Naive thymus-derived CD4-positive, alpha-beta T cell (primary cell): ENCODE measurements at regions of chr15 and their contacts with region 1.

Region 1: GRCh38 chr15:68277603-68278344 is at the start of gene FEM1B:
- DNase-seq: peak; percentile 82 to 92 (median 88)
- ATAC-seq: peak; percentile 89
- H3K4me3 ChIP-seq: peak within 1 kb of the TSS; percentile 92
- H3K4me3 Mint-ChIP-seq: peak within 1 kb of the TSS; percentile 86 to 100 (median 96)
- H3K27ac ChIP-seq: peak within 1 kb of the TSS; percentile 90
- H3K27ac Mint-ChIP-seq: peak within 1 kb of the TSS; percentile 89 to 99 (median 98)
- H3K4me1 ChIP-seq: peaks cover 33 to 38% of the 10 kb centered on the region in 2 donors
- H3K4me1 Mint-ChIP-seq: peaks cover 40 to 63% (median 56%) of the 10 kb centered on the region in 7 donors
- H3K27me3 ChIP-seq: no peaks in the 10 kb centered on the region
- H3K27me3 Mint-ChIP-seq: no peaks in the 10 kb centered on the region
- total RNA-seq, gene FEM1B: 56.5 to 73.2 (median 62.0) TPM

Region 2: DNA sequence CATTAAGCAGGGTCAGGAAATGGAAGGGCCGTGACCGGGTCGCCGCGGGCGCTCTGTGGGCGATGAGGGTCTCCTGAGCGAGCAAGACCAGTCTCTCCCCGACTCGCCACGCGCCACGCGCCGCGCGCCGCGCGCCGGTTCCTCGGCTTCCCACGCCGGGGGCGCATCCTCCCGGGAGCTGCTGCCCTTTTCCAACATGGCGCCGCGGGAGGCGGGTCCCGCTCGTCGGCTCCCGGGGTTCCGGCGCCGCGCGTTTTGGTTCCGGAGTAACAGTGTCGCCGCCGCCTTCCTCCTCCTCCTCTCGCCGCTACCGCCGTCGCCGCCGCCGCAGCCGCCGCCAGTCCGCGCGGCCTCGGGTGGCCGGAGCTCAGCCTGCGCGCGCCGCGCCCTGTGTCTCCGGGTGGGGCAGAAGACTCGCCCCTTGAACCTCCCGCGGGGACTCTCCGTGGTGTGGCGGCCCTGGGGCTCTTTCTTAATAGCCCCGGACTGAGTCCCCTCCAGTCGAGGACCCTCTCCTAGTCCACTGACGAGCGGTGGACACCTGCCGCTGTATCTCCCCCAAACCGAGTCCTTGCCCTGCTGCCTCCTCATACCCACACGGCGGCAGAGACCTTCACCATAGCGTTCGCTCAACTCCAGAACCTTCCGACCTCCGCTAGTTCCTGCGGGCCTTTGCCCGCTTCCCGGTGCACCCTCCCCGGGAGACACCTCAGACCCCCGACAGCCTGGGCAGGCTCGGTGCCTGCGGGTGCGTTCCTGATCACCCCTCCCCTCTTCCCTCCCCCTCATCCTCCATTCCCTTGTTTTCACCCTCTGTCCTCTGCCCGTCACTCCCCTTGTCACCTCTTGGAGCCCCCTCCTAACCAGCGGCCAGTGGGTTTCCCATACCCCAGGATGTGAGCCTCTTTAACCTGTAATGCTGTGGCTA is 735.1 kb before region 1 on chr15 and contains the start of gene MAP2K5:
- CTCF ChIA-PET with region 1: no interaction called
- POLR2A ChIA-PET with region 1: interaction called, 7 read pairs
- intact Hi-C with region 1: loop called (anchors 1 to 5 kb)
- DNase-seq: peak; percentile 75 to 87 (median 78)
- ATAC-seq: peak; percentile 89
- H3K4me3 ChIP-seq: peak within 1 kb of the TSS; percentile 90
- H3K4me3 Mint-ChIP-seq: peak within 1 kb of the TSS; percentile 92 to 98 (median 98)
- H3K27ac ChIP-seq: peak within 1 kb of the TSS; percentile 78
- H3K27ac Mint-ChIP-seq: peak within 1 kb of the TSS; percentile 97 to 100 (median 99)
- H3K4me1 ChIP-seq: peaks cover 7 to 22% of the 10 kb centered on the region in 2 donors
- H3K4me1 Mint-ChIP-seq: peaks cover 20 to 68% (median 56%) of the 10 kb centered on the region in 7 donors
- H3K27me3 ChIP-seq: no peaks in the 10 kb centered on the region
- H3K27me3 Mint-ChIP-seq: no peaks in the 10 kb centered on the region
- total RNA-seq, gene MAP2K5: 23.4 to 43.4 (median 35.7) TPM

Region 3: GRCh38 chr15:68149059-68149458 is 128.7 kb before region 1 on chr15:
- CTCF ChIA-PET with region 1: no interaction called
- POLR2A ChIA-PET with region 1: no interaction called
- intact Hi-C with region 1: no loop called
- DNase-seq: no peak
- ATAC-seq: no peak
- H3K4me3 ChIP-seq: no peak overlapping the region
- H3K4me3 Mint-ChIP-seq: no peak overlapping the region
- H3K27ac ChIP-seq: no peak overlapping the region
- H3K27ac Mint-ChIP-seq: peak overlapping the region in 6 of 9 donors; percentile 1 to 77 (median 44)
- H3K4me1 ChIP-seq: no peaks in the 10 kb centered on the region
- H3K4me1 Mint-ChIP-seq: peaks cover 4 to 28% (median 24%) of the 10 kb centered on the region in 7 donors
- H3K27me3 ChIP-seq: no peaks in the 10 kb centered on the region
- H3K27me3 Mint-ChIP-seq: no peaks in the 10 kb centered on the region

Region 4: GRCh38 chr15:68229386-68230156 is 48.2 kb before region 1 on chr15 and contains the start of gene CLN6:
- CTCF ChIA-PET with region 1: no interaction called
- POLR2A ChIA-PET with region 1: interaction called, 16 read pairs
- intact Hi-C with region 1: loop called (anchors 1 kb)
- DNase-seq: peak; percentile 68 to 88 (median 81)
- ATAC-seq: peak; percentile 94
- H3K4me3 ChIP-seq: peak within 1 kb of the TSS; percentile 93
- H3K4me3 Mint-ChIP-seq: peak within 1 kb of the TSS; percentile 86 to 98 (median 92)
- H3K27ac ChIP-seq: peak within 1 kb of the TSS; percentile 79
- H3K27ac Mint-ChIP-seq: peak within 1 kb of the TSS; percentile 69 to 97 (median 88)
- H3K4me1 ChIP-seq: peaks cover 0 to 17% of the 10 kb centered on the region in 2 donors
- H3K4me1 Mint-ChIP-seq: peaks cover 30 to 44% (median 38%) of the 10 kb centered on the region in 7 donors
- H3K27me3 ChIP-seq: no peaks in the 10 kb centered on the region
- H3K27me3 Mint-ChIP-seq: peaks cover 0 to 3% (median 0%) of the 10 kb centered on the region in 5 donors
- total RNA-seq, gene CLN6: 15.0 to 66.6 (median 19.0) TPM

Region 5: DNA sequence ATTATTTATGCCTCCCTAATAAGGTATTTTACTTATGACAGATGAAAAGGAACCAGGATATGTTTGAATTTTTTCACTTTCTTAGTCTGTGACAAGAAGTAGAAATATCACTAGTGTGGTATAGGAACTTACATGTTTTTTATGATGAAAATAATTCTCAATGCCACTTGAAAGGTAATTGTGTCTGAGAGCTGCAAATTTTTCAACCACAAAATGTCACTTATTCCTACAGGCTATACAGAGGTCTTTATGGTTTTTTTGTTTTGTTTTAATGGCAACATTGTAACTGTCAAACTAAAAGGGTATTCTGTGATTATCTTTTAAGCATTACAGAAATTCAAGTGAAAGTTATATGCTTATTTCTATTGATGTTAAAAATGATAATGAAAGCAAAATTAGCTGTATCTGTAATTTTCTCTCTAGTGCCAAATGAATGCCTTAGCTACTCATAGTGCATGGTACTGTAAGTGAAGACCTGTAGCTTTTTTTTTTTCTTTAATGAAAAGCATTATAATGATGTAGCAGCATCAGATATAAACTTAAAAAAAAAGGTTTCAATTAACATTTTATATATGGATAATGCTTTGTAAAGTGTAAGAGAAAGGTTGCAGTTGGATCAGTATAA is 14.5 kb after region 1 on chr15:
- CTCF ChIA-PET with region 1: interaction called, 3 read pairs
- POLR2A ChIA-PET with region 1: interaction called, 31 read pairs
- intact Hi-C with region 1: no loop called
- DNase-seq: no peak
- ATAC-seq: peak; percentile 53
- H3K4me3 ChIP-seq: no peak overlapping the region
- H3K4me3 Mint-ChIP-seq: no peak overlapping the region
- H3K27ac ChIP-seq: no peak overlapping the region
- H3K27ac Mint-ChIP-seq: peak overlapping the region in 3 of 9 donors; percentile 25 to 56 (median 42)
- H3K4me1 ChIP-seq: peaks cover 10% of the 10 kb centered on the region in 2 donors
- H3K4me1 Mint-ChIP-seq: peaks cover 28 to 79% (median 49%) of the 10 kb centered on the region in 7 donors
- H3K27me3 ChIP-seq: no peaks in the 10 kb centered on the region
- H3K27me3 Mint-ChIP-seq: no peaks in the 10 kb centered on the region

Region 6: GRCh38 chr15:68304589-68305337 is 27.0 kb after region 1 on chr15:
- CTCF ChIA-PET with region 1: interaction called, 4 read pairs
- POLR2A ChIA-PET with region 1: interaction called, 10 read pairs
- intact Hi-C with region 1: loop called (anchors 1 kb)
- DNase-seq: no peak
- ATAC-seq: no peak
- H3K4me3 ChIP-seq: no peak overlapping the region
- H3K4me3 Mint-ChIP-seq: no peak overlapping the region
- H3K27ac ChIP-seq: no peak overlapping the region
- H3K27ac Mint-ChIP-seq: peak overlapping the region in 4 of 9 donors; percentile 23 to 72 (median 56)
- H3K4me1 ChIP-seq: peaks cover 5 to 15% of the 10 kb centered on the region in 2 donors
- H3K4me1 Mint-ChIP-seq: peaks cover 11 to 30% (median 27%) of the 10 kb centered on the region in 7 donors
- H3K27me3 ChIP-seq: no peaks in the 10 kb centered on the region
- H3K27me3 Mint-ChIP-seq: peaks cover 0 to 7% (median 0%) of the 10 kb centered on the region in 5 donors

Region 7: GRCh38 chr15:69413822-69414700 is 1136.3 kb after region 1 on chr15 and contains the start of gene KIF23:
- CTCF ChIA-PET with region 1: no interaction called
- POLR2A ChIA-PET with region 1: no interaction called
- intact Hi-C with region 1: loop called (anchors 10 kb)
- DNase-seq: peak; percentile 84 to 93 (median 90)
- ATAC-seq: peak; percentile 98
- H3K4me3 ChIP-seq: peak within 1 kb of the TSS; percentile 66
- H3K4me3 Mint-ChIP-seq: peak within 1 kb of the TSS; percentile 81 to 88 (median 86)
- H3K27ac ChIP-seq: no peak within 1 kb of the TSS
- H3K27ac Mint-ChIP-seq: peak within 1 kb of the TSS in 7 of 9 donors; percentile 34 to 86 (median 78)
- H3K4me1 ChIP-seq: peaks cover 0 to 4% of the 10 kb centered on the region in 2 donors
- H3K4me1 Mint-ChIP-seq: peaks cover 0 to 36% (median 7%) of the 10 kb centered on the region in 7 donors
- H3K27me3 ChIP-seq: peaks cover 0 to 9% of the 10 kb centered on the region in 2 donors
- H3K27me3 Mint-ChIP-seq: peaks cover 8 to 22% (median 10%) of the 10 kb centered on the region in 5 donors
- total RNA-seq, gene KIF23: 0.30 to 39.4 (median 0.72) TPM in 4 of 5 experiments, not detected in the other